Endothelial cell of umbilical vein (primary cell): ENCODE measurements at regions of chr5 and their contacts with region 1.

Region 1: DNA sequence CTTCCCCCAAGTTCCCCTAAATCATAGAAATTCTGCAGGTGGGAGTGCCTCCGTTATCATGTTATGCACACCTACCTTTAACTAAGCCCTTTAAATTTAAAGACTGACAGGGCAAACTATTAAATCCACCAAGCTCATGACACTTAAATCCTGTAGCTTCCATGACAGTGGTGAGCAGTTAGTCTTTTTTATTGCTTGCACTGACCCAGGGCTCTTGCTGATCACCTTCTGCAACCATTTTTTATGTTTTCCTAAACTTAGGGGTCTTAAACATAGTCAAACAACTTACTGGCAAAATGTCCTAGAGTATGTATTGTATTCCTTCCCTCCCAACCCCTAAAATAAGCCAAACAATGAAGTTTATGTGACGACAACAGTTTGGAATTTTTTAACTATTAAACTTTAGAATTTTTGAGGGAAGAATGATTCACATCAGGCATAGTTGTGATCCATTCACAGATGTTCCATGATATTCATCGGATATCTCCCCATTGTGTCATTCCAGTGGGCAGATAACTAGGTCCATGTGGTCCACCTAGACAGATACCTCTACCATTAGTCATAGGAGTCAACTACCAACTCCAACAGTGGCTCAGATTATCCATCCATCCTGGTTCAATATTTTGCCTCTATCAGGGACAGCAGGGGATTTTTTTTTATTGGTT is 283.1 kb downstream of the ADAMTS6 start:
- DNase-seq: peak; percentile 90
- H3K4me3 ChIP-seq: no peak overlapping the region
- H3K27ac ChIP-seq: peak overlapping the region; percentile 92
- H3K4me1 ChIP-seq: peaks cover 40% of the 10 kb centered on the region
- H3K27me3 ChIP-seq: no peaks in the 10 kb centered on the region
- CTCF ChIP-seq: no peak
- POLR2A ChIP-seq: peak; percentile 43

Region 2: GRCh38 chr5:65035211-65036206 is 163.1 kb before region 1 on chr5:
- CTCF ChIA-PET with region 1: no interaction called
- POLR2A ChIA-PET with region 1: no interaction called
- dilution Hi-C with region 1: no loop called
- intact Hi-C with region 1: loop called (anchors 2 kb)
- DNase-seq: peak; percentile 95
- H3K4me3 ChIP-seq: peak overlapping the region; percentile 60 to 69 (median 63)
- H3K27ac ChIP-seq: peak overlapping the region; percentile 97
- H3K4me1 ChIP-seq: peaks cover 23% of the 10 kb centered on the region
- H3K27me3 ChIP-seq: no peaks in the 10 kb centered on the region
- CTCF ChIP-seq: no peak
- POLR2A ChIP-seq: peak; percentile 89

Region 3: GRCh38 chr5:65102828-65103711 is 95.5 kb before region 1 on chr5:
- CTCF ChIA-PET with region 1: no interaction called
- POLR2A ChIA-PET with region 1: no interaction called
- dilution Hi-C with region 1: no loop called
- intact Hi-C with region 1: loop called (anchors 2 kb)
- DNase-seq: peak; percentile 74
- H3K4me3 ChIP-seq: peak overlapping the region; percentile 13 to 57 (median 43)
- H3K27ac ChIP-seq: peak overlapping the region; percentile 63
- H3K4me1 ChIP-seq: peaks cover 13% of the 10 kb centered on the region
- H3K27me3 ChIP-seq: no peaks in the 10 kb centered on the region
- CTCF ChIP-seq: peak in 1 of 2 donors; percentile 36
- POLR2A ChIP-seq: peak; percentile 34

Region 4: GRCh38 chr5:65209341-65209740 is 10.8 kb after region 1 on chr5:
- CTCF ChIA-PET with region 1: interaction called, 4 read pairs
- POLR2A ChIA-PET with region 1: interaction called, 3 read pairs
- dilution Hi-C with region 1: no loop called
- intact Hi-C with region 1: loop called (anchors 1 kb)
- DNase-seq: peak; percentile 90
- H3K4me3 ChIP-seq: peak overlapping the region in 1 of 3 experiments; percentile 2
- H3K27ac ChIP-seq: peak overlapping the region; percentile 97
- H3K4me1 ChIP-seq: peaks cover 35% of the 10 kb centered on the region
- H3K27me3 ChIP-seq: no peaks in the 10 kb centered on the region
- CTCF ChIP-seq: no peak
- POLR2A ChIP-seq: no peak

Region 5: DNA sequence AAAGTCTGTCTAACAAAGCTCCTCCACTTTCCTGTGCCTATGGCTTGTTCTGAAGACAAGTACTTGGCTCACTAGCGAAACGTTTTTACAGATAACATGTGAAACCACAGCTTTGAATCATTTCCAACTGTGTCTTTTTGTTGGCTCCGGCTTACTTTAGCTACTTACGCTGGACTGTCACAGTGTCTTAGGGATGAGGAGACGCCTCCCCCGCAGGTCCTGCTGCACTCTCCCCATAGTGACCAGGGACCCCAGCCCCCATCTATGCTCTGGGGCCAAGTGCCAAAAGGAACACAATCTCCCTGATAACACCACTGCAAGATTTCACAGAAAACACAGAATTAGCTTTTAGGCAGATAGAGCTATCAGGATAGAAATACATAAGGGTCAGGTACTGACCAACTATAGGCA is 64.1 kb after region 1 on chr5:
- CTCF ChIA-PET with region 1: interaction called, 3 read pairs
- POLR2A ChIA-PET with region 1: no interaction called
- dilution Hi-C with region 1: no loop called
- intact Hi-C with region 1: loop called (anchors 5 kb)
- DNase-seq: peak; percentile 76
- H3K4me3 ChIP-seq: peak overlapping the region in 1 of 3 experiments; percentile 29
- H3K27ac ChIP-seq: peak overlapping the region; percentile 62
- H3K4me1 ChIP-seq: peaks cover 28% of the 10 kb centered on the region
- H3K27me3 ChIP-seq: no peaks in the 10 kb centered on the region
- CTCF ChIP-seq: no peak
- POLR2A ChIP-seq: no peak